CD4-positive, alpha-beta T cell (primary cell): ENCODE measurements at regions of chr3 and their contacts with region 1.

Region 1: DNA sequence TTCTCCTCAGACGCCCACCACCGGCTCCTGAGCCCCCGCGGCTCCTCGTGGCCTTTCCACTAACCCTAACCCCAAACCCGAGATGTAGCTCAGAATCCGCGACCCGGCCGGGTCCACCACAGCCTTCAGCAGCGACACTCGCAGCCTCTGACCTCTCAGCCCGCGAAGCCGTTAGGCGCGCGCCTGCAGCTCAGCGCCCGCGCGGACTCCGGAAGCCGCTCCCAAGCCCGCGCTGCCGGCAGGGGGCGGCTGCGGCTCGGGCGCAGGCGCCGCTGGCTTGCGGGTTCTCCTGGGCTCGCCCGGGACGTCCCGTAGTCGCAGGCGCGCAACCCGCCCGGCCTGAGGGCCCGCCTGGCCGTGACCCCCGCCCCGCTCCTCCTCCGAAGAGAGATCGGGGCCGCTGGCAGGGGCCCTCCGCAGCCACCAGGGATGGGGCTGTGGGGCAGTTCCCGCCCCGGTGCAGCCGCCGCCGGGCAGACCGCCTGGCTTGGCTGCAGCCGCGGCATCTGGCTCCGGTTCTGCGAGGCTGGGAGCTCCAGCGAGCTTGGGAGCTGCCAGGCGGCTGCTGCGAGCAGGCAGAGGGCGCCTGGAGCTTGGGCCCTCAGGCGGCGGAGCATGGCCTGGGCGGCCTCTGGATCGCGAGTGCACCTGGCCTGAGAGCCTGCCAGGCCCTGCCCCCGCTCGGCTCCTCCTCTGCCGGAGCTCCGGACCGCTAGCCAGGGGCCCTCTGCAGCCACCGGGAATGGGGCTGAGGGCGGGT is 120.7 kb downstream of the LMLN start:
- DNase-seq: peak; percentile 59 to 90 (median 70)
- ATAC-seq: peak; percentile 90
- H3K4me3 ChIP-seq: peak overlapping the region; percentile 71
- H3K4me3 Mint-ChIP-seq: peak overlapping the region; percentile 70
- H3K27ac ChIP-seq: no peak overlapping the region
- H3K27ac Mint-ChIP-seq: no peak overlapping the region
- H3K4me1 ChIP-seq: peaks cover 18% of the 10 kb centered on the region
- H3K4me1 Mint-ChIP-seq: peaks cover 10% of the 10 kb centered on the region
- H3K27me3 ChIP-seq: peaks cover 11 to 45% of the 10 kb centered on the region in 2 experiments
- H3K27me3 Mint-ChIP-seq: peaks cover 62% of the 10 kb centered on the region
- CTCF ChIP-seq: peak; percentile 34

Region 2: DNA sequence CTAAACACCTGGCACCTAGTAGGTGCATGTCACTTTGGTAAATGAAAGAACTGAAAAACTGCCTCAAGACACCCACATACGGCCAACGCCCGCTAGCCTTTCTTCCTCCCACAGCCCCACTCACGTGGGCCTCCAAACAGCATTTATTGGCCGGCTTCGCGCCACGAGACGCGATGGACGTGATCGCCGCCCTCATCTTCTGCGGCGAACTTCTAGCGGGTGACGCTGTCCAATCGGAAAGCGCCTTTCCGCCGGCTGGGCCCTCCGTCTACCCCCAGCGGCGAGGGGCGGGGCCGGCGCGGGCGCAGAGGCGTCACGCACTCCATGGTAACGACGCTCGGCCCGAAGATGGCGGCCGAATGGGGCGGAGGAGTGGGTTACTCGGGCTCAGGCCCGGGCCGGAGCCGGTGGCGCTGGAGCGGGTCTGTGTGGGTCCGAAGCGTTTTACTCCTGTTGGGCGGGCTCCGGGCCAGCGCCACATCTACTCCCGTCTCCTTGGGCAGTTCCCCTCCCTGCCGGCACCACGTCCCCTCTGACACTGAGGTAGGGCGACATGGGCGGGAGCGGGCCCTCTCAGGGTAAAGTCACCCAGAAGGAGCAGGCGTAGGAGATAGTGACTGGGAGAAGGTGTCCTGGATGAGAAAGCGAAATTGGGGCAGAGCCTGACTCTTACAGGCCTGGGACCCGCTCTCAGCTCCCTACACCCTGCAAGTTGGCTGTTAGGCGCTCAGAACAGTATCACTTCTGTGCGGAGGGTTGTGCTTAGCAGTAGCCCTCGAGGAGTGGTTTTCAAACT is 120.6 kb before region 1 on chr3 and contains the start of gene LMLN:
- CTCF ChIA-PET with region 1: interaction called, 4 read pairs
- POLR2A ChIA-PET with region 1: no interaction called
- intact Hi-C with region 1: loop called in 1 of 2 experiments (anchors 10 kb)
- DNase-seq: peak; percentile 89 to 98 (median 94)
- ATAC-seq: peak; percentile 91
- H3K4me3 ChIP-seq: peak within 1 kb of the TSS; percentile 91
- H3K4me3 Mint-ChIP-seq: peak within 1 kb of the TSS; percentile 90
- H3K27ac ChIP-seq: peak within 1 kb of the TSS; percentile 60 to 84
- H3K27ac Mint-ChIP-seq: peak within 1 kb of the TSS; percentile 95
- H3K4me1 ChIP-seq: peaks cover 36% of the 10 kb centered on the region
- H3K4me1 Mint-ChIP-seq: peaks cover 52% of the 10 kb centered on the region
- H3K27me3 ChIP-seq: no peaks in the 10 kb centered on the region
- H3K27me3 Mint-ChIP-seq: no peaks in the 10 kb centered on the region
- CTCF ChIP-seq: no peak
- total RNA-seq, gene LMLN: 3.5 to 3.6 TPM